ENCODE measurements at regions of chr19 and their contacts with region 1.

Region 1: DNA sequence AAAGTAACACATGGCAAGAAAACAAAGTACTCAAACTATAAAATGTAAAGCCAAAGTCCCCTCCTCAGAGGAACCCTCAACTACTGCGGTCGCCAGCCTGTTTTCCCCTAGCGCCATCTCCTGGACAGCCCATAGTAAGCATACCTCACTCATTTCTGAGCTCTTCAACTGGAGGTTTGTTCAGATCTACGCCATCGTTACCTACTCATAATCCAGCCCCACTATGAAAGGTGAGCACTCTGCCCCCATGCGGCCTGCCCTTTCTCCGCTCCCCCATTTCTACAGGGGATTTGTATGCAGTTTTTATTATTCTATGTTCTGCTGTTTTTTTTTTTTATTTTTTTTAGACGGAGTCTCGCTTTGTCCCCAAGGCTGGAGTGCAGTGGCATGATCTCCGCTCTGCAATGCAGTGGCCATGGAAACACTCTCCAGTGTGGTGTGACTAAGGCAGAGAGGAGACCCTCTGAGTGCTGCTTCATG is 26.2 kb downstream of the OPA3 start:
- DNase-seq: peak; percentile 87
- ATAC-seq: peak; percentile 99
- H3K4me3 Mint-ChIP-seq: no peak overlapping the region
- H3K27ac Mint-ChIP-seq: peak overlapping the region; percentile 5
- H3K4me1 Mint-ChIP-seq: peaks cover 25% of the 10 kb centered on the region
- H3K27me3 Mint-ChIP-seq: no peaks in the 10 kb centered on the region

Region 2: GRCh38 chr19:45496349-45496953 is 62.0 kb before region 1 on chr19:
- CTCF ChIA-PET with region 1: interaction called, 6 read pairs
- POLR2A ChIA-PET with region 1: no interaction called
- intact Hi-C with region 1: loop called in 1 of 2 experiments (anchors 1 kb)
- DNase-seq: peak; percentile 74
- ATAC-seq: peak; percentile 1
- H3K4me3 Mint-ChIP-seq: peak overlapping the region; percentile 6
- H3K27ac Mint-ChIP-seq: no peak overlapping the region
- H3K4me1 Mint-ChIP-seq: peaks cover 43% of the 10 kb centered on the region
- H3K27me3 Mint-ChIP-seq: peaks cover 31% of the 10 kb centered on the region

Region 3: GRCh38 chr19:45523642-45524256 is 34.7 kb before region 1 on chr19:
- CTCF ChIA-PET with region 1: interaction called, 6 read pairs
- POLR2A ChIA-PET with region 1: interaction called, 3 read pairs
- intact Hi-C with region 1: loop called (anchors 1 kb)
- DNase-seq: peak; percentile 84
- ATAC-seq: peak; percentile 99
- H3K4me3 Mint-ChIP-seq: no peak overlapping the region
- H3K27ac Mint-ChIP-seq: peak overlapping the region; percentile 19
- H3K4me1 Mint-ChIP-seq: peaks cover 14% of the 10 kb centered on the region
- H3K27me3 Mint-ChIP-seq: peaks cover 2% of the 10 kb centered on the region

Region 4: GRCh38 chr19:45547976-45548609 is 10.3 kb before region 1 on chr19:
- CTCF ChIA-PET with region 1: interaction called, 14 read pairs
- POLR2A ChIA-PET with region 1: no interaction called
- intact Hi-C with region 1: no loop called
- DNase-seq: no peak
- ATAC-seq: no peak
- H3K4me3 Mint-ChIP-seq: no peak overlapping the region
- H3K27ac Mint-ChIP-seq: no peak overlapping the region
- H3K4me1 Mint-ChIP-seq: peaks cover 6% of the 10 kb centered on the region
- H3K27me3 Mint-ChIP-seq: no peaks in the 10 kb centered on the region

Region 5: GRCh38 chr19:45569619-45570421 is 11.4 kb after region 1 on chr19:
- CTCF ChIA-PET with region 1: interaction called, 14 read pairs
- POLR2A ChIA-PET with region 1: interaction called, 3 read pairs
- intact Hi-C with region 1: no loop called
- DNase-seq: peak; percentile 84
- ATAC-seq: peak; percentile 87
- H3K4me3 Mint-ChIP-seq: no peak overlapping the region
- H3K27ac Mint-ChIP-seq: peak overlapping the region; percentile 49
- H3K4me1 Mint-ChIP-seq: peaks cover 4% of the 10 kb centered on the region
- H3K27me3 Mint-ChIP-seq: no peaks in the 10 kb centered on the region

Region 6: GRCh38 chr19:45985321-45985720 is 426.9 kb after region 1 on chr19:
- CTCF ChIA-PET with region 1: no interaction called
- POLR2A ChIA-PET with region 1: no interaction called
- intact Hi-C with region 1: no loop called
- DNase-seq: no peak
- ATAC-seq: no peak
- H3K4me3 Mint-ChIP-seq: no peak overlapping the region
- H3K27ac Mint-ChIP-seq: no peak overlapping the region
- H3K4me1 Mint-ChIP-seq: no peaks in the 10 kb centered on the region
- H3K27me3 Mint-ChIP-seq: peaks cover 6% of the 10 kb centered on the region